ENCODE measurements at regions of chr5 and their contacts with region 1.

Region 1: DNA sequence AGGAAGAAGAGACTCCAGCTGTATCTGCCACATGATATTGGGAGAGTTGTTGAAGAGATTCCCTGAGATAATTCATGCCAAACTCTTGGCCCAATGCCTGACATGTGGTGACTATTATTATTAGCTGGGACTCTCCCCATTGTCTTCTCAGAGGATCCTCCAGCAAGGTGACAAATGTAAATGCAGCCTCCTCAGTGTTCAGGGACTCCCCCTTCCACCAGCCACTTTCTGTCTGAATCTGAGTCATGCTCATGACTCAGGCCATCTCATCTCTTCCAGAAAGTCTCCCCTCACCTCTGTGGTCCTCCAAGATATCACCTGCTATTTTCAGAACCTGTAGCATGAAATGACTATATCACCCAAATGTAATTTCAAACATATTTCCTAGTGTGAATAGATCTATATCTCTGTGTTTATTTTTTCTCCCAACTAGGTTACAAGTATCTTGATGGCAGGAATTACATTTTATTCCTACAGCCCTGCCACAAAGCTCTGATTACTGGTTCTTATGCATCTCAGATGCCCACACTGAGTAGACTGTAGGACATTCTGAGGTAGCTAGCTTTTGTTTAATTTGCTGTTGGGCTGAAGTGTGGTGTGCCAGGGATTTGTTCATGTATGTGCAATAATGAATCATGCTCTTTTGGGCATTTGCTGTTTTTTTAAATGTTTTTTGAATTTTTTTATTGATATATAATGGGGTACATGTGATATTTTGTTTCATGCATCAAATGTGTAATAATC is 126.6 kb upstream of the IL12B start:
- DNase-seq: peak; percentile 88
- H3K4me3 Mint-ChIP-seq: no peak overlapping the region
- H3K27ac Mint-ChIP-seq: no peak overlapping the region
- H3K4me1 Mint-ChIP-seq: peaks cover 50% of the 10 kb centered on the region
- H3K27me3 Mint-ChIP-seq: peaks cover 14% of the 10 kb centered on the region

Region 2: GRCh38 chr5:157464519-157465171 is 1992.2 kb before region 1 on chr5:
- CTCF ChIA-PET with region 1: no interaction called
- intact Hi-C with region 1: loop called (anchors 5 kb)
- DNase-seq: peak; percentile 92
- H3K4me3 Mint-ChIP-seq: peak overlapping the region; percentile 28
- H3K27ac Mint-ChIP-seq: peak overlapping the region; percentile 89
- H3K4me1 Mint-ChIP-seq: peaks cover 36% of the 10 kb centered on the region
- H3K27me3 Mint-ChIP-seq: peaks cover 16% of the 10 kb centered on the region

Region 3: DNA sequence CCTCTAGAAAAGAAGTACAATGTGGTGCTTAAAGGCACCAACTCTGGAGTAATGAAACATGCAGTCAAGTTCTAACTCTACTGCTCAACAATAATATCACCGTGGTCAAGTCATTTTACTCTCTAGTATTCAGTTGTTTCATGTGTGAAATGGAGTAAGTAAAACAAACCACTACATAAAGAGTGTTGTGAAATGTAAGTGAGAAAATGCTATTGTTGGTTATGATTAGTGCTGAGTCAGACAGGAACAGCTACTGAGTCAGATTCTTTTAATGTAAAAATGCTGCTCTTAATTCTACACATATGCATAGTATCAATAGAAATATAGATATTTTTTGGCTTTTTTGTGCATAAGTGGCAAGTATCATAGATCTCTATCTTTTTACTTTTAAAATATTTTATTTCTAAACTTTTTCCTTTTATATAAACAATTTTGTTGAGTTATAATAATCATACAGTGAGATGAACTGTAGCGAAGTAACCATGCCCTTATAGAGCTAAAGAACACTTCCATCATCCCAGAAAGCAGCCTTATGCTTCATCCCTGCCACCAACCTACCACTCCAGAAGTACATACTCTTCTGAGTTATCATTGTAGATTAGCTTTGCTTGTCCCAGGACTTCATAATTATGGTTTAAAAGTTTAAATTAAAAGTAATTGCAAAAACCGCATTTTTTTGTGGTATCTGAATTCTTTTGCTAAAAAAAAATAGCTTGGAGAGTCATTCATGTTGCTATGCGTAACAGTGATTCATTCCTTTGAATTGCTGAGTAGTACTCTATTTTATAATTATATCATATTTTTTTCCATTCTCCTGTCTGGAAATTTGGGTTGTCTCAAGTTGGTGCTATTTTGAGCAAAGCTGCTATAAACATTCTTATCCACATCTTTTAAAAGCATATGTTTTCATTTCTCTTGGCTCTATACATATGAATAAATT is 1049.7 kb before region 1 on chr5:
- CTCF ChIA-PET with region 1: no interaction called
- intact Hi-C with region 1: loop called (anchors 2 kb)
- DNase-seq: no peak
- H3K4me3 Mint-ChIP-seq: no peak overlapping the region
- H3K27ac Mint-ChIP-seq: no peak overlapping the region
- H3K4me1 Mint-ChIP-seq: peaks cover 8% of the 10 kb centered on the region
- H3K27me3 Mint-ChIP-seq: no peaks in the 10 kb centered on the region

Region 4: DNA sequence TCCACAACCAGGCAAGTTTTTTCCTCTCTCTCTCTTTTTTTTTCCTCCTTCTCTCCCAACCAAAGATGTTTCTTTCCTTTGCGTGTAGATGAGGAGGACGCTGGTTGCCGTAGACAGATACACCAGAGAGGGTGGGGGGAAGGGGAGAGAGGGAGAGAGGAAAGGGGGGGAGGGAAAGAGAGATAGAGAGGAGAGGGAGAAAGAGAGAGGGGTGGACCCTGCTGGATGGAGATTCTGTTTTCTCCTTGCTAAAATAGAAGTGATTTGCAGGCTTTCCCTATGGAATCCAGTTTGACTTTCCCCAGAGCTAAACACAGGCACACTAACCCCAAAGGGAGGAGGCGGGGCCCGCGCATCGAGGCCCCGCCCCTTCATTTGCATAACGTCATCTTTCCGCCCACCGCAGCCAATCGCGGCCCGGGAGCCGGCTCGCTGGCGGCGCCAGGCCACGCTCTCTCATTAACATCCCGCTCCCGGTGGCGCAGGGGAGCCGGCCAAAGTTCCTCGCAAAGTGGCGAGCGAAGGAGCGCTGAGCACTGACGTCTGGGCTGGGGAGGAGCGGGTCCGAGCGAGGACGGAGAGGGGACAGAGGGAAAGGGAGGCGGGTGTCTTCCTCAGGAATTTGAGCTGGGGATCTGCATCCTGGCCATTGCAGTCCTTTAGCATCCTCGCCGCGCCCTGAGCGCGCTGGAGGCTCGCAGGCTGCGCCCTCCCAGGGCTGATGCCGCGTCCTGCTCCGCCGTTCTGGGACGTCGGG is 356.7 kb before region 1 on chr5:
- CTCF ChIA-PET with region 1: no interaction called
- intact Hi-C with region 1: loop called (anchors 2 kb)
- DNase-seq: peak; percentile 85
- H3K4me3 Mint-ChIP-seq: peak overlapping the region; percentile 85
- H3K27ac Mint-ChIP-seq: peak overlapping the region; percentile 55
- H3K4me1 Mint-ChIP-seq: peaks cover 34% of the 10 kb centered on the region
- H3K27me3 Mint-ChIP-seq: peaks cover 58% of the 10 kb centered on the region

Region 5: DNA sequence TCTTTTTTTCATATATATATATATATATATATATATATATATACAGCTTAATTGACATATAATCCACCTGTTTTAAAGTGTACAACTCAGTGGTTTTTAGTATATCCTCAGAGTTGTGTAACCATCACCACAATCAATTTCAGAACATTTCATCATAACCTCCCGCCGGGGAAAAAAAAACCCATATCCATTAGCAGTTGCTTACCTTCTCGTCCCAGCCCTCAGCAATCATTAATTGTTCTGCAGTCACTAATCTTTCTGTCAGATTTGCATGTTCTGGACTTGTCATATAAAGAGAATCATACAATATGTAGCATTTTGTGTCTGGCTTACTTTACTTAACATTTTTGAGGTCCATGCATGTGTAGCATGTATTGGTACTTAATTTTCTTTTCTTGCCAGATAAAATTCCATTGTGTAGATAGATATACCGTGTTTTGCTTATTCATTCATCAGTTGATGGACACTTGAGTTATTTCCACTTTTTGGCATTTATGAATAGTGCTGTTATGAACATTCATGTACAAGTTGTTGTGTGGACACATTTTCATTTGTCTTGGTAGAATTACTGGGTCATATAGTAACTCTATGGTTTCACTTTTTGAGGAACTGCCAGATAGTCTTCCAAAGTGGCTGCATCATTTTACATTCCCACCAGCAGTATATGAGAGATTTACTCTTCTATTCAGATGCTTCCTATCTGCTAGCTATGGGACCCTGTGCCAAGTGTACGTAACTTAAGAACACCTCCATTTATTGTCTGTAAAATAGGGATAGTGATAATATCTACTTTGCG is 244.0 kb before region 1 on chr5:
- CTCF ChIA-PET with region 1: no interaction called
- intact Hi-C with region 1: no loop called
- DNase-seq: no peak
- H3K4me3 Mint-ChIP-seq: no peak overlapping the region
- H3K27ac Mint-ChIP-seq: no peak overlapping the region
- H3K4me1 Mint-ChIP-seq: peaks cover 31% of the 10 kb centered on the region
- H3K27me3 Mint-ChIP-seq: no peaks in the 10 kb centered on the region

Region 6: GRCh38 chr5:159240301-159240870 is 216.5 kb before region 1 on chr5:
- CTCF ChIA-PET with region 1: no interaction called
- intact Hi-C with region 1: loop called (anchors 1 kb)
- DNase-seq: peak; percentile 24
- H3K4me3 Mint-ChIP-seq: no peak overlapping the region
- H3K27ac Mint-ChIP-seq: peak overlapping the region; percentile 55
- H3K4me1 Mint-ChIP-seq: peaks cover 44% of the 10 kb centered on the region
- H3K27me3 Mint-ChIP-seq: no peaks in the 10 kb centered on the region

Region 7: DNA sequence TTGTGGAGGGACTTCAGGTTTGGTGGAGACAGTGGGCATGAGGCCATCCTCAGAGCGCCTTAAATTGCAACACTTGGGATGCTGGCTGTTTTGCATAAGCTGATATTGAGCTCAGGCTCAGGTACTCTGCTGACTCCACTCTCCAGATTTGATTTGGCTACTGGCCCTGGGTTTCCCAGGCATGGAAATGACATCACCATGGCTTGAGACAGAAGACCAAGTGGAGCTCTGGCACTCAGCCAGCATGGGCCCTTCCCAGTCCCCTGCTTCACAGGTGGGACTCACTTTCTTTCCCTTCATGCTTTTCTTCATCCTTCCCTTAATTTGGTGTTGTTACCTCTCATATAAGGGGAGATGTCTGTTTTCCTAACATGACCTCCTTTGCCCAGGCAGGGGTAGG is 54.6 kb before region 1 on chr5:
- CTCF ChIA-PET with region 1: no interaction called
- intact Hi-C with region 1: no loop called
- DNase-seq: no peak
- H3K4me3 Mint-ChIP-seq: no peak overlapping the region
- H3K27ac Mint-ChIP-seq: no peak overlapping the region
- H3K4me1 Mint-ChIP-seq: no peaks in the 10 kb centered on the region
- H3K27me3 Mint-ChIP-seq: peaks cover 8% of the 10 kb centered on the region

Region 8: DNA sequence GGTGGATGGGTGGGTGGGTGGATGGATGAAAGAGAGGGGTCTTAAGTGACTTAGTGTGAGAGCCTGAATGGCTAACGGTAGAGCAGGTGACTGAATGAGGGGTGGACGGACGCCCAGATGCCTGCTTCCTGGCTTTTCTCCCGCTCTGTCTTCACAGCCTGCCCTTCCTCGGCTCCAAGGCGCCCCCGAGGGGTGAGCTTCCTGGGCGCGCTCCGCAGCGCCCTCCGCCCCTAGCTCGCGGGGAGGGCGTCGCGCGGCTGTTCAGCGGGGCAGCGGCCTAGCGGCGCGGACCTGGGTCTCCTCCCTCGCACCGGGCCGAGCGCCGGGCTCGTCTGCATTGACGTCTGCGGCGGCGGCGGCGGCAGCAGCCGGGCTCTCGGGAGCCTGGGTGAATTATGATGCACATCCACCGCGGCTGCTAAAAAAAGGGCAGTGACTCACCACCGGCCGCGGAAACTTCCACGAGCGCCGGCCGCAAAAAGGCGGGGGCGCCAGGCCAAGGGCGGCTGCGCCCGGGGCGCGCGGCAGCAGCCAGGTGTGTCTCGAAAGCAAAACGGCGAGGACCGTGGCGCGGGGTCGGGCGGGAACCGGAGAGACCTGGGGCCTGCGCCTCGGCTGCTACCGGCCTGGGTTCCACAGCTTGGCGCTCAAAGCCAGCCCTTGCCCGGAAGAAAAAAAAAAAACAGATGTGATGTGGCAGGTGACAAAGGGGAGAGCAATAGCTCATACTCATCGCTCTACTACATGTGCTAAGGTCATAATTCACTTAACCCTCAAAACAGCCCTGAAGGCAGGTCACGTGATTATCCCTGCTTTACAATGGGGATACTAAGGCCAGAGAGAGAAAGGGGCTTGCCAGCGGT is 316.4 kb after region 1 on chr5:
- CTCF ChIA-PET with region 1: no interaction called
- intact Hi-C with region 1: loop called (anchors 1 kb)
- DNase-seq: peak; percentile 86
- H3K4me3 Mint-ChIP-seq: peak overlapping the region; percentile 41
- H3K27ac Mint-ChIP-seq: no peak overlapping the region
- H3K4me1 Mint-ChIP-seq: peaks cover 8% of the 10 kb centered on the region
- H3K27me3 Mint-ChIP-seq: peaks cover 32% of the 10 kb centered on the region

Region 9: DNA sequence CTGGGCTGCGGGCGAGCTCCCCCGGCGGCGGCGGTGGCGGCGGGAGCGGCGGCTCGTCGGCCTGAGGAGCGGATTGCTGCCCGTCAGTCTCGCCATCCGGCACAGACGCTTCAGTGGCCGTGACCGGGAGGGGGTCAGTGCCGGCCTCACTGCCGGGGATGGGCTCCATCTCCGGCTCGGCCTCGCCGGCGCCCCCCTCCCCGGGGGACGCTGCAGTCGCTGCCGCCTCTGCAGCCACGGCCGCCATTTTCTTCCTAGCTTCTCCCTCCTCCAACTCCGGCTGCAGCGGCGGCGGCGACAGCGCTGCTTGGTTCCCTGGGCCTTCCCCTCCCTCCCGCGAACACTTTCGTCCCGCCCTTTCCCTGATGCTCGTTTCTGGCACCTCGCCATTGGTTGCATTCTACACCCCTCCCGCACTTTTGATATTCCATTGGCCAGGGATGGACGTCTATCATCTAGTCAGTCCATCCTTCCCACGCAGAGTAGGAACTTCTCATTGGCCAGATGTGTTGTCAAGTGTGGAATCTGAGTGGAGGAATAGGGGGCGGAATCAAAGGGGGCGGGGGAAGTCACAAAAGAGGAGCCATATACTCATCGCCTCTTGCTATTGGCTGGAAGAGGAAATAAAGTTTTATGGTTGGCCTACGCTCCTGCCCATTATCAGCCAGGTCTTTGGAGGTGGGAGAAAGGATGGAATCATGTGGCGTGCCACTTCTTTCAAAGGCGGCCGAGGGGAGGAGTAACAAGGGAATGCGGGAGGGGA is 662.4 kb after region 1 on chr5 and contains the start of gene PWWP2A:
- CTCF ChIA-PET with region 1: no interaction called
- intact Hi-C with region 1: loop called (anchors 2 kb)
- DNase-seq: peak; percentile 99
- H3K4me3 Mint-ChIP-seq: peak within 1 kb of the TSS; percentile 97
- H3K27ac Mint-ChIP-seq: peak within 1 kb of the TSS; percentile 92
- H3K4me1 Mint-ChIP-seq: peaks cover 13% of the 10 kb centered on the region
- H3K27me3 Mint-ChIP-seq: no peaks in the 10 kb centered on the region
- total RNA-seq, gene PWWP2A: 14.8 to 15.8 TPM